Naive thymus-derived CD4-positive, alpha-beta T cell (primary cell): ENCODE measurements at regions of chr6 and their contacts with region 1.

Region 1: GRCh38 chr6:31403283-31403989 is at the start of gene MICA:
- DNase-seq: peak in 8 of 9 donors; percentile 32 to 79 (median 41)
- ATAC-seq: peak; percentile 71
- H3K4me3 ChIP-seq: peak within 1 kb of the TSS; percentile 79
- H3K4me3 Mint-ChIP-seq: peak within 1 kb of the TSS; percentile 83 to 98 (median 90)
- H3K27ac ChIP-seq: peak within 1 kb of the TSS; percentile 76
- H3K27ac Mint-ChIP-seq: peak within 1 kb of the TSS; percentile 25 to 94 (median 78)
- H3K4me1 ChIP-seq: peaks cover 17 to 19% of the 10 kb centered on the region in 2 donors
- H3K4me1 Mint-ChIP-seq: peaks cover 64 to 90% (median 70%) of the 10 kb centered on the region in 7 donors
- H3K27me3 ChIP-seq: no peaks in the 10 kb centered on the region
- H3K27me3 Mint-ChIP-seq: peaks cover 0 to 2% (median 0%) of the 10 kb centered on the region in 5 donors
- total RNA-seq, gene MICA: 12.1 to 17.4 (median 15.2) TPM

Region 2: GRCh38 chr6:31419842-31420241 is 16.4 kb after region 1 on chr6:
- CTCF ChIA-PET with region 1: no interaction called
- POLR2A ChIA-PET with region 1: no interaction called
- intact Hi-C with region 1: loop called in 1 of 2 experiments (anchors 2 kb)
- DNase-seq: no peak
- ATAC-seq: no peak
- H3K4me3 ChIP-seq: no peak overlapping the region
- H3K4me3 Mint-ChIP-seq: no peak overlapping the region
- H3K27ac ChIP-seq: no peak overlapping the region
- H3K27ac Mint-ChIP-seq: peak overlapping the region in 2 of 9 donors; percentile 70 to 84
- H3K4me1 ChIP-seq: no peaks in the 10 kb centered on the region
- H3K4me1 Mint-ChIP-seq: peaks cover 0 to 5% (median 0%) of the 10 kb centered on the region in 7 donors
- H3K27me3 ChIP-seq: no peaks in the 10 kb centered on the region
- H3K27me3 Mint-ChIP-seq: peaks cover 0 to 9% (median 0%) of the 10 kb centered on the region in 5 donors

Region 3: GRCh38 chr6:31441365-31442267 is 38.2 kb after region 1 on chr6:
- CTCF ChIA-PET with region 1: interaction called, 31 read pairs
- POLR2A ChIA-PET with region 1: interaction called, 16 read pairs
- intact Hi-C with region 1: no loop called
- DNase-seq: peak; percentile 69 to 85 (median 75)
- ATAC-seq: peak; percentile 98
- H3K4me3 ChIP-seq: no peak overlapping the region
- H3K4me3 Mint-ChIP-seq: peak overlapping the region in 2 of 10 donors; percentile 13 to 32
- H3K27ac ChIP-seq: no peak overlapping the region
- H3K27ac Mint-ChIP-seq: no peak overlapping the region
- H3K4me1 ChIP-seq: no peaks in the 10 kb centered on the region
- H3K4me1 Mint-ChIP-seq: peaks cover 0 to 6% (median 4%) of the 10 kb centered on the region in 7 donors
- H3K27me3 ChIP-seq: no peaks in the 10 kb centered on the region
- H3K27me3 Mint-ChIP-seq: peaks cover 28 to 74% (median 49%) of the 10 kb centered on the region in 5 donors

Region 4: DNA sequence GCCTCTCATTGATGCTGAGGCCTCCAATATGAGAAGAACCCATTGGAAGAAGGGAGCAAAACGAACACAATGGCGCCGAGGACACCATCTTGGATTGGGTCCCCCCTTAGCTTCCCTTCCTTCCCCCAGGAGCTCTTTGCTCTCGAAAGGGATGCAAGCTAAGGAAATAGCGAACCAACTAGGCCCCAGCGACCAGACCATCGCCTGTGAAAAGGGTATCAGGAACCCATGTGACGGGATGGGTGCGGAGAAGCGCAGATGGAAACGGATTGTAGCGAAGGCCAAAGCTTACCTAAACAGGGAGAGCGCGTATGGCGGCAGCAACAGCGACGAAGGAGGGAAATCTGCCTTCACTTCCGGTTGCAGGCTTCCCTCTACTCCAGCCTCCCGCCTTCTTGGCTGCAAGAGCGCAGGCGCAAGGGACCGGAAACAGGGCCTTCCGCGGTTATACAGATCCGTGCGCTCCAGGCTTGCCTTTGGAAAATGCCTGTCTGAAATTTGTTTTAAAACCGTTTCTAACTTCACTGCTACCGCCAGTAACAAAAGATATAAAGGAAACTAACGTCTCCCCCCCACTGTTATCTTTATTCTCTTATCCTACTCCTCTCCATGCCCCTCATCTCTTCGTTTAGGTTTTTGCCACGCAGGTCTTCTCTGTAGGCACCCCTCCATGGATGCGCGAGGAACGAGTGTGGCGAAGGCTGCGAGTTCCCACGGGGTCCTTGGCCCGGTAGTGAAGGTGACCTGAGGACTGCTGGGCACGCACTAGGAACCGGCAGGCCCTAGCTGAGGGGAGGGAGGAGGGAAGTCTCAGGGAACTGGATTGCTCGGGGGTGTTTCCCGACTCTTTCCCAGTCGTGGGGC is 138.5 kb after region 1 on chr6 and contains the start of gene DDX39B:
- CTCF ChIA-PET with region 1: no interaction called
- POLR2A ChIA-PET with region 1: interaction called, 19 read pairs
- intact Hi-C with region 1: loop called in 1 of 2 experiments (anchors 5 kb)
- DNase-seq: peak; percentile 80 to 97 (median 94)
- ATAC-seq: peak; percentile 83
- H3K4me3 ChIP-seq: peak within 1 kb of the TSS; percentile 77
- H3K4me3 Mint-ChIP-seq: peak within 1 kb of the TSS; percentile 84 to 99 (median 98)
- H3K27ac ChIP-seq: peak within 1 kb of the TSS; percentile 97
- H3K27ac Mint-ChIP-seq: peak within 1 kb of the TSS; percentile 90 to 100 (median 100)
- H3K4me1 ChIP-seq: peaks cover 34 to 45% of the 10 kb centered on the region in 2 donors
- H3K4me1 Mint-ChIP-seq: peaks cover 34 to 65% (median 55%) of the 10 kb centered on the region in 7 donors
- H3K27me3 ChIP-seq: no peaks in the 10 kb centered on the region
- H3K27me3 Mint-ChIP-seq: no peaks in the 10 kb centered on the region
- total RNA-seq, gene DDX39B: 443 to 761 (median 546) TPM

Region 5: DNA sequence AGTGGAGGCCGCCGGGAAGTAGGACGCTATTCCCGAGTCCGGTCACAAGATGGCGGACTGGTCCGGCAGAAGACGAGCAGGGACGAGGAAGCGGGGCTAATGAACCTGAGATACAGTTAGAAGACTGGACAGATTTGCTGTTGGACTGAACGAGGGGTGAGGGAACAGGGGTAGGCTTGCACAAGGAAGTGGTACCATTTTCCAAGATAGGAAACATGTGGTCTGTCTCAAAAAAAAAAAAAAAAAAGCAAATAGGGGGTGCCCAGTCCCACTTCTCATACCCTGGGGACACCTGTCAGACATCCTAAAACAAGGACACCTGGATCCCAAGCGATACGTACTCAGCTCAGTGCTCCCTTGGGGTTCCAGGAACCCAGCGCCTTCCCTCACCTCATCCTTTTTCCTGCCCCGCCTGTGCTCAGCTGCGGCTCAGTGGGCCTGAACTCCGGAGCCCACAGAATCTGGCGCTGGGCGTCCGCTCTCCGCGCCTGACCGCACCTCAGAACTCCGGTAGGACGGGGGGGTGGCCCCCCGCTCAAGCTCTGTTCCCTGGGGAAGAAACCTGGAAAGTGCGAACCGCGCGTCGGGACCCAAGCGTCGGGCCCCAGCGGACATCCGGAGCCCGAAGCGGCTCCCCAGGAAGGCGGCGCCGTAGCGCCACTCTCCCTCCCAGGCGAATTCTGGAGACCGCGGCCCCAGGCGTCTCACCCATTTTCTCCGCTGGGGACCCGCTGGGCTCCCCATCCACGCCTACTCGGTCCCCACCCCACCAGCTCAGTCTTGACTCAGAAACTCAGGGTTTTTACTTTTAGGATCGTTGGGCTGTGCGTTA is 277.6 kb after region 1 on chr6 and contains the start of gene LY6G5C:
- CTCF ChIA-PET with region 1: no interaction called
- POLR2A ChIA-PET with region 1: no interaction called
- intact Hi-C with region 1: no loop called
- DNase-seq: peak in 8 of 9 donors; percentile 28 to 65 (median 48)
- ATAC-seq: peak; percentile 80
- H3K4me3 ChIP-seq: peak within 1 kb of the TSS; percentile 78
- H3K4me3 Mint-ChIP-seq: peak within 1 kb of the TSS; percentile 86 to 98 (median 90)
- H3K27ac ChIP-seq: peak within 1 kb of the TSS; percentile 68
- H3K27ac Mint-ChIP-seq: peak within 1 kb of the TSS; percentile 60 to 86 (median 68)
- H3K4me1 ChIP-seq: peaks cover 15 to 16% of the 10 kb centered on the region in 2 donors
- H3K4me1 Mint-ChIP-seq: peaks cover 14 to 32% (median 19%) of the 10 kb centered on the region in 7 donors
- H3K27me3 ChIP-seq: no peaks in the 10 kb centered on the region
- H3K27me3 Mint-ChIP-seq: no peaks in the 10 kb centered on the region
- total RNA-seq, gene LY6G5C: 2.4 to 4.3 (median 3.1) TPM

Region 6: DNA sequence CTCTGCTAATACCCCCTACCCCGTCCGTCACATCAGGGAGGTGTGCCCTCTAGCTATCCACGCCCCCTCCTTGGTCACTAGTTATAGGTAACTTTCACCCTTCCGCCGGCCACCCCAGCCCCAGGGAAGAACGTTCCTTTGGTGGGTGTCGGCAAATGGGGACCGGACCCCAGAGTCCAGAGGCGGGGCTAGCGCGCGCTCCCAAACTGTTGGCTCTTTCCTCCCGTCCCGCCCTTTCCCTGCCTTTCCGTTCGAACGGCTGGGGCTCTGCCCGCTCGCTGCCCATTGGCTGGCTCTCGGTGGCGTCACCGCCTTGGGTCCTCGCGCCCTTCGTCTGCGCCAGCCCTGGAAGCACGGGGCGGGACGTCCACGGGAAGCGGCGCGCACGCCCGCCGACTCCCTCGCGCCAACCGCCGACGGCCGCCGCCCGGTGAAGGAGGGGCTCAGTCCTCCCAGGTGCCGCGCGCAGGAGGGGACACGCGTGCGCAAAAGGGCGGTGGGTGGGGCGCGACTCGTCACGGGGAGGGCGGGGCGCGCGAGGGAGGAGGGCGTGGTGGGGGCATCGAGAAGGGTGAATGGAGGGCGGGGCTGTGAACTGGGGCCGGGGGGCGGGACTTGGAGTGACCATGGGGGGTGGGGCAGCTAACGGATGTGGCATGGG is 2006.7 kb after region 1 on chr6:
- CTCF ChIA-PET with region 1: no interaction called
- POLR2A ChIA-PET with region 1: no interaction called
- intact Hi-C with region 1: no loop called
- DNase-seq: peak; percentile 94 to 98 (median 95)
- ATAC-seq: peak; percentile 82
- H3K4me3 ChIP-seq: peak overlapping the region; percentile 78
- H3K4me3 Mint-ChIP-seq: peak overlapping the region; percentile 85 to 95 (median 90)
- H3K27ac ChIP-seq: peak overlapping the region; percentile 100
- H3K27ac Mint-ChIP-seq: peak overlapping the region; percentile 65 to 99 (median 97)
- H3K4me1 ChIP-seq: peaks cover 35 to 36% of the 10 kb centered on the region in 2 donors
- H3K4me1 Mint-ChIP-seq: peaks cover 25 to 60% (median 46%) of the 10 kb centered on the region in 7 donors
- H3K27me3 ChIP-seq: no peaks in the 10 kb centered on the region
- H3K27me3 Mint-ChIP-seq: no peaks in the 10 kb centered on the region